Caco-2 (cell line): ENCODE measurements at regions of chr2 and their contacts with region 1.

Region 1: GRCh38 chr2:189379287-189379630 is 62.0 kb upstream of the WDR75 start:
- DNase-seq: peak; percentile 74 to 81
- H3K4me3 ChIP-seq: no peak overlapping the region
- H3K4me3 Mint-ChIP-seq: peak overlapping the region; percentile 53
- H3K27ac Mint-ChIP-seq: peak overlapping the region; percentile 63
- H3K4me1 ChIP-seq: peaks cover 56% of the 10 kb centered on the region
- H3K4me1 Mint-ChIP-seq: peaks cover 29% of the 10 kb centered on the region
- H3K27me3 ChIP-seq: no peaks in the 10 kb centered on the region
- H3K27me3 Mint-ChIP-seq: no peaks in the 10 kb centered on the region
- CTCF ChIP-seq: no peak

Region 2: GRCh38 chr2:188819781-188820180 is 559.5 kb before region 1 on chr2:
- CTCF ChIA-PET with region 1: no interaction called
- POLR2A ChIA-PET with region 1: no interaction called
- intact Hi-C with region 1: loop called (anchors 2 kb)
- DNase-seq: peak; percentile 49 to 67
- H3K4me3 ChIP-seq: no peak overlapping the region
- H3K4me3 Mint-ChIP-seq: peak overlapping the region; percentile 36
- H3K27ac Mint-ChIP-seq: peak overlapping the region; percentile 73
- H3K4me1 ChIP-seq: peaks cover 28% of the 10 kb centered on the region
- H3K4me1 Mint-ChIP-seq: peaks cover 25% of the 10 kb centered on the region
- H3K27me3 ChIP-seq: no peaks in the 10 kb centered on the region
- H3K27me3 Mint-ChIP-seq: no peaks in the 10 kb centered on the region
- CTCF ChIP-seq: no peak

Region 3: GRCh38 chr2:189049709-189050164 is 329.5 kb before region 1 on chr2:
- CTCF ChIA-PET with region 1: no interaction called
- POLR2A ChIA-PET with region 1: no interaction called
- intact Hi-C with region 1: loop called (anchors 1 kb)
- DNase-seq: peak in 1 of 2 experiments; percentile 16
- H3K4me3 ChIP-seq: no peak overlapping the region
- H3K4me3 Mint-ChIP-seq: peak overlapping the region; percentile 39
- H3K27ac Mint-ChIP-seq: peak overlapping the region; percentile 76
- H3K4me1 ChIP-seq: peaks cover 39% of the 10 kb centered on the region
- H3K4me1 Mint-ChIP-seq: peaks cover 17% of the 10 kb centered on the region
- H3K27me3 ChIP-seq: no peaks in the 10 kb centered on the region
- H3K27me3 Mint-ChIP-seq: no peaks in the 10 kb centered on the region
- CTCF ChIP-seq: no peak

Region 4: GRCh38 chr2:189096769-189097447 is 282.4 kb before region 1 on chr2:
- CTCF ChIA-PET with region 1: no interaction called
- POLR2A ChIA-PET with region 1: no interaction called
- intact Hi-C with region 1: loop called (anchors 1 kb)
- DNase-seq: peak in 1 of 2 experiments; percentile 52
- H3K4me3 ChIP-seq: no peak overlapping the region
- H3K4me3 Mint-ChIP-seq: no peak overlapping the region
- H3K27ac Mint-ChIP-seq: peak overlapping the region; percentile 70
- H3K4me1 ChIP-seq: peaks cover 19% of the 10 kb centered on the region
- H3K4me1 Mint-ChIP-seq: peaks cover 21% of the 10 kb centered on the region
- H3K27me3 ChIP-seq: no peaks in the 10 kb centered on the region
- H3K27me3 Mint-ChIP-seq: no peaks in the 10 kb centered on the region
- CTCF ChIP-seq: no peak

Region 5: DNA sequence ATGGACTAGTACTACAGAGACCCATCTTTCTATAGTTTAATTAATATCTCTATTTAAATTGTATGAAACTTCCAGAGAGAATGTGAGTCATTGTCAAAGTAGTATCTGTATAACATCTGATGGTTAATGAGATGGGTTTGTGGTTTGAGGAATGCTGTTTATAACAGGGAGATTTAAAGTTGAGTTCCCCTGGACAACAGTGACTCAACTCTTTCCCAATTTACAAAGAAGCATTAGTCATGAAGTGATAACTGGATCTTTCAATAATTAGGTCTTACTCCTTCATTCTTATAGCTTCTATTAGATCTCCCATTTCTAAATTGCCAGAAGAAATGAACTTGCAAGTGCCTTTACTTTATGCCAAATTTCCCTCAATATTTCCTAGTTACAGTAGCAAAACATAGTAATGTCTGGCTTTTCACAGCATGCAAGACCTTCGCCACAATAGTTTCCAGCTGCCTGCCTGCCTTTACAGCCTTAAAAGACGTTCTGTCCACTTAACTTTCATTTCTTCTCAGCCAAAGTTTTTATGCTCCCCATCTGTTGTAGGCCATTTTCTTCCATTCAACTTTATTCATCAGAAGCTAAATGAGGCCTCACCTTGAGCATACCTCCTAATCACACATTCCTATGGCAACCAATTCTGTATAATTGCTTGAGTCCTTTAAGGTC is 14.3 kb after region 1 on chr2:
- CTCF ChIA-PET with region 1: no interaction called
- POLR2A ChIA-PET with region 1: interaction called, 3 read pairs
- intact Hi-C with region 1: loop called (anchors 1 kb)
- DNase-seq: no peak
- H3K4me3 ChIP-seq: no peak overlapping the region
- H3K4me3 Mint-ChIP-seq: no peak overlapping the region
- H3K27ac Mint-ChIP-seq: peak overlapping the region; percentile 66
- H3K4me1 ChIP-seq: peaks cover 21% of the 10 kb centered on the region; the same call in 1 of the 2 replicates
- H3K4me1 Mint-ChIP-seq: peaks cover 15% of the 10 kb centered on the region
- H3K27me3 ChIP-seq: no peaks in the 10 kb centered on the region
- H3K27me3 Mint-ChIP-seq: no peaks in the 10 kb centered on the region
- CTCF ChIP-seq: no peak